Gastrocnemius medialis (tissue), 4 donors: ENCODE measurements at regions of chrX and their contacts with region 1.

Region 1: GRCh38 chrX:119235872-119236622 is at the start of gene PGRMC1:
- DNase-seq: peak; percentile 39 to 57
- ATAC-seq: peak; percentile 80 to 86
- H3K4me3 ChIP-seq: peak within 1 kb of the TSS; percentile 61 to 76 (median 69)
- H3K27ac ChIP-seq: peak within 1 kb of the TSS; percentile 64 to 77 (median 72)
- H3K4me1 ChIP-seq: no peaks in the 10 kb centered on the region
- H3K27me3 ChIP-seq: peaks cover 0 to 4% (median 0%) of the 10 kb centered on the region in 3 donors
- CTCF ChIP-seq: no peak
- POLR2A ChIP-seq: peak; percentile 63 to 64
- total RNA-seq, gene PGRMC1: 11.4 to 14.4 (median 13.0) TPM

Region 2: GRCh38 chrX:117532339-117532738 is 1703.7 kb before region 1 on chrX:
- in situ Hi-C with region 1: no loop called
- intact Hi-C with region 1: no loop called
- DNase-seq: no peak
- ATAC-seq: no peak
- H3K4me3 ChIP-seq: no peak overlapping the region
- H3K27ac ChIP-seq: no peak overlapping the region
- H3K4me1 ChIP-seq: no peaks in the 10 kb centered on the region
- H3K27me3 ChIP-seq: no peaks in the 10 kb centered on the region
- CTCF ChIP-seq: no peak
- POLR2A ChIP-seq: no peak

Region 3: DNA sequence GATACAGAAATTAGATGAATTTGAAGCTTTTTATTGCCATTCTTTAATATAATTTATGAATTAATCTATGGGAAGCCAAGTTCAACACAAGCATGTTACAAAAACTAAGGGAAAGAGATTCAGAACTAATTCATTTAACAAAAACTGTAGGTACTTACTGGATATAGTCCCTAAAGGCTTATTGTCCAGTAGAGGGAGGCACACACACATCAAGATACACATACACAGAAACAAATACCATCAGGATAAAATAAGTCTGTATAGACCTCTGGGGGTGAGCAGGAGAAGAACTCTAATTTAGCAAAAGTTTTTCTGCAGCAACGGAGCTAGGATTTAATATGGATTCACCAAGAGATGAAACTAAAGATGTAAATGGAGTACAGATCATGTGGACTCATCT is 591.7 kb before region 1 on chrX:
- in situ Hi-C with region 1: no loop called
- intact Hi-C with region 1: no loop called
- DNase-seq: no peak
- ATAC-seq: peak in 1 of 2 donors; percentile 69
- H3K4me3 ChIP-seq: no peak overlapping the region
- H3K27ac ChIP-seq: no peak overlapping the region
- H3K4me1 ChIP-seq: no peaks in the 10 kb centered on the region
- H3K27me3 ChIP-seq: no peaks in the 10 kb centered on the region
- CTCF ChIP-seq: peak in 4 of 5 experiments; percentile 18 to 46 (median 34)
- POLR2A ChIP-seq: no peak

Region 4: DNA sequence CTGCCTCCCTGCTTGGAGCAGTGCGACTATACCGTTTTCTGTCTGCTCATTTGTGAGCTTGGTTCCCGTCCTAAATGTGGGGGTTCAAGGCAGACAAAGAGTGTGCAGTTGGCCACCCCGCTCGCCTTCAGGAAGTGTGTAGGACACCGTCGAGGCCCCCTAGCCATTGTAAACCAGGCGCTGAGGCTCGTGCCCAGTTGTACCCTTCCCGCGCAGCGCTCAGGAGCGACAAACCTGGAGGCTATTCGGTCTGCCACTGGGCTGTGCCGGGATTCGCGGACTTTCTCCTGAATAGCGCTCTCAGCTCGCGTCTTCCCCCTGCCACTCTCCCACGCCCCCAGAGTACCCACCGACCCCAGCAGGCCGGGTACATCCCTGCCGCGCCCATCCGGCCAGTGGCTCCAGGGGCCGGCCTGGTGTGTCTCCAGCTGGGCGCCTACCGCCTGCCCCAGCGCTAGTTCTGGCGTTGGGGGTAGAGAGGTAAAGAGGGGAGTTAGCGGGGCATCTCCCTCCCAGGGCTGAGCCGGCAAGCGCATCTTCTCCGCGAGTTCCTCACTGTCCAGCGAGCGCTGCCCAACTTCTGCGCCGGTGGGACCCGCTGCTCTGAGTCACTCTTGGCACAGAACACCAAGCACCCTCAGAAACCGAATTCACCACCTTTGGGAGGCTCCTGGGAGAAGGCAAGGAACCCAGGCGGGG is 262.5 kb before region 1 on chrX:
- in situ Hi-C with region 1: no loop called
- intact Hi-C with region 1: no loop called
- DNase-seq: peak in 1 of 2 donors; percentile 35
- ATAC-seq: no peak
- H3K4me3 ChIP-seq: peak overlapping the region; percentile 69 to 82 (median 74)
- H3K27ac ChIP-seq: peak overlapping the region in 3 of 4 donors; percentile 93
- H3K4me1 ChIP-seq: peaks cover 5 to 10% of the 10 kb centered on the region in 2 donors
- H3K27me3 ChIP-seq: no peaks in the 10 kb centered on the region
- CTCF ChIP-seq: no peak
- POLR2A ChIP-seq: no peak

Region 5: GRCh38 chrX:119041175-119041574 is 194.9 kb before region 1 on chrX:
- in situ Hi-C with region 1: no loop called
- intact Hi-C with region 1: loop called (anchors 5 kb)
- DNase-seq: peak in 1 of 2 donors; percentile 43
- ATAC-seq: peak; percentile 79 to 89
- H3K4me3 ChIP-seq: no peak overlapping the region
- H3K27ac ChIP-seq: peak overlapping the region in 1 of 4 donors; percentile 38
- H3K4me1 ChIP-seq: no peaks in the 10 kb centered on the region
- H3K27me3 ChIP-seq: no peaks in the 10 kb centered on the region
- CTCF ChIP-seq: no peak
- POLR2A ChIP-seq: no peak

Region 6: GRCh38 chrX:119181491-119181890 is 54.6 kb before region 1 on chrX:
- in situ Hi-C with region 1: no loop called
- intact Hi-C with region 1: no loop called
- DNase-seq: no peak
- ATAC-seq: no peak
- H3K4me3 ChIP-seq: no peak overlapping the region
- H3K27ac ChIP-seq: no peak overlapping the region
- H3K4me1 ChIP-seq: no peaks in the 10 kb centered on the region
- H3K27me3 ChIP-seq: no peaks in the 10 kb centered on the region
- CTCF ChIP-seq: no peak
- POLR2A ChIP-seq: no peak